WTC11 (cell line): ENCODE measurements at regions of chr12 and their contacts with region 1.

Region 1: DNA sequence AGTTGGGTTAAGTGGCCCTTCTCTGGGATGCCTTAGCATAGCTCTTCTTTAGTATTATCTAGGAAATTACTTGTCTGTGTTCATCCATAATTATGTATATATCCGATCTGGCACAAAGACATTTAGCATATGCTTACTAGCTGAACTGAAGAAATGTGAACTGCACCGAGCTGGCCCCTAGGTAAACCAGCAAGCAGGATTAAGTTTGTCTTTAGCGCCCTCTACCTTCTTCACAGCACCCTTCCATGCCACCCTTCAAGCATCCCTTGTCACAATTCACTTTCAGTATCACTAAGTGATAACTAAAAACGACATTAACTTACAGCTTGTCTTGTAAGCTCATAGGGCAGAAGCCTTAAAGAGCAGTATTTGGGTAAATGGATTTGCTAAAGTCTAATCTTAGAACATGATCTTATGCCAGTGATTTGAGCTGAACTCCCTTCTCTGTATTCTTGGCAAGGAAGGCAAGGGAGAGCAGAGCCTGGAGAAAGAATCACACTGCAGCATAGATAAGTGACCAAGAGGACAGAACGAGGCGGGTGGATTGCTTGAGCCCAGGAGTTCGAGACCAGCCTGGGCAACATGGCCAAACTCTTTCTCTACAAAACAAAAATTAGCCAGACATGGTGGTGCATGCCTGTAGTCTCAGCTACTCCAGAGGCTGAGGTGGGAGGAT is 2.6 kb upstream of the HAL start:
- DNase-seq: peak; percentile 32
- ATAC-seq: peak; percentile 97
- H3K4me3 Mint-ChIP-seq: no peak overlapping the region
- H3K27ac Mint-ChIP-seq: peak overlapping the region; percentile 25; the same call in 1 of the 2 replicates
- H3K4me1 Mint-ChIP-seq: peaks cover 6% of the 10 kb centered on the region
- H3K27me3 Mint-ChIP-seq: no peaks in the 10 kb centered on the region
- CTCF ChIP-seq: peak; percentile 50; the same call in 1 of the 2 replicates

Region 2: GRCh38 chr12:95739561-95740313 is 259.0 kb before region 1 on chr12:
- CTCF ChIA-PET with region 1: no interaction called
- POLR2A ChIA-PET with region 1: no interaction called
- DNase-seq: no peak
- ATAC-seq: no peak
- H3K4me3 Mint-ChIP-seq: no peak overlapping the region
- H3K27ac Mint-ChIP-seq: no peak overlapping the region
- H3K4me1 Mint-ChIP-seq: no peaks in the 10 kb centered on the region
- H3K27me3 Mint-ChIP-seq: no peaks in the 10 kb centered on the region
- CTCF ChIP-seq: no peak

Region 3: DNA sequence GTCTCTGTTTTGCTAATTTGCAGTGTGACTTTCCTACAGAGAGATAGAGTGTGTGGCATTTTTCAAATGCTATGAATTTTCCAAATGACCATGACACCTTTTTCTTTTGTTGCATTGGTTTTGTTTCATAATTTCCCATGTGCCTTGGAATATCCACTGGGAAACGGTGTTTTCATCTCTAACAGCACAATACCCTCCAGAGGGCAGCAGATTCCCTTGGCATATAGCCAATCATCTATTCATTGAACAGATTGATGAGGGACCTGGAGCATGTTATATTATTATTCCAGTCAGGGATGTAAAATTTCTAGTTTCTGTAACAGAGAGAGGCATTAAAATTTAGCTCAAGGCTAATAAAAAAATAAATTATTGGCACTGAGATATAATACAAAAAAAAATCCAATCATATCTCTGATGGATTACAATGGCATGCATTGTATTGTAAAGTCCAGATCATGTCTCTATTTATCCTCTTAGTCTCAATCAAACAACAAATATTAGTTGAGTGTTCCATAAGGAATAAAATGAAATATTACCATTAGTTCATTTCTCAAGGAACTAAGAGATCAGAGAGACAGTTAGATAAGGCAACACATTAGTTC is 178.5 kb before region 1 on chr12:
- CTCF ChIA-PET with region 1: no interaction called
- POLR2A ChIA-PET with region 1: no interaction called
- DNase-seq: no peak
- ATAC-seq: no peak
- H3K4me3 Mint-ChIP-seq: no peak overlapping the region
- H3K27ac Mint-ChIP-seq: no peak overlapping the region
- H3K4me1 Mint-ChIP-seq: peaks cover 3% of the 10 kb centered on the region; the same call in 1 of the 2 replicates
- H3K27me3 Mint-ChIP-seq: no peaks in the 10 kb centered on the region
- CTCF ChIP-seq: no peak; the same call in 1 of the 2 replicates

Region 4: GRCh38 chr12:95874452-95874851 is 124.3 kb before region 1 on chr12:
- CTCF ChIA-PET with region 1: interaction called, 13 read pairs
- POLR2A ChIA-PET with region 1: no interaction called
- DNase-seq: peak; percentile 20
- ATAC-seq: peak; percentile 94
- H3K4me3 Mint-ChIP-seq: no peak overlapping the region
- H3K27ac Mint-ChIP-seq: no peak overlapping the region
- H3K4me1 Mint-ChIP-seq: peaks cover 22% of the 10 kb centered on the region
- H3K27me3 Mint-ChIP-seq: no peaks in the 10 kb centered on the region
- CTCF ChIP-seq: no peak

Region 5: DNA sequence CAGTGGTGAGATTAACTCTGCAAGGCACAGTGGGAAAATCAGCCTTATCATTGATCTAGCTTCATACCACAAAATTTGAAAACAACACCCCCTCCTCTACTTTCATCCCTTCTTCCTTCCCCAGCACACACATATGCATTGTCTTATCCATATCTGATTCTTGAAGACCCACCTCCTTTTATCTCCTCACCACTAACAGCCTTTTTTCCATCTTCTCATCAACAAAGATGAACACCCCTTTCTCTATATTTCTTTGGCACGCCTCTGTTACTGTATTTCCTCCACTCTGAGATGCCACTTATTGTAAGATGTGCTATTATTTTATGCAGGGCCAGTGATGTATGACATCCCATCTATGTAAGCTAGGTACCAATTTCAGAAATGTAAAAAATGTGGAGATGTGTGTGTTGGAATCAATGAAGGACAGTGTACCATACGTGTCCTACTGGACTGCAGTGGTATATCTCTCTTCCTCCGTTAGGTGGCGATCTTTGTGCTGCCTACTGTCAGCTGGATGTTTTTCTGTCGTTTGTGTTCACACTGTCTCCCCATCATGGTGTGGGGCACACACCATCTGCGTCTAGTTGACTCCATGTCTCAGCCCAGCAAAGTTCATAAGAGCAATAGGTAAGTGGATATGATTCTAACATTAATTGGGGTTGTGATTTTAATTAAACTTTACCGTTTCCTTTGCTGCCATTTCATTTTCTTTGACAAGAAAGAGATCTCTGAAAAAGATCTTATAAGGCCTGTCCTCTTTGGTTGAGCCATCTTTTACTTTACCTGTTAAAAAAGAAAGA is 80.4 kb before region 1 on chr12:
- CTCF ChIA-PET with region 1: interaction called, 66 read pairs
- POLR2A ChIA-PET with region 1: no interaction called
- DNase-seq: peak; percentile 47
- ATAC-seq: peak; percentile 99
- H3K4me3 Mint-ChIP-seq: no peak overlapping the region
- H3K27ac Mint-ChIP-seq: no peak overlapping the region
- H3K4me1 Mint-ChIP-seq: no peaks in the 10 kb centered on the region
- H3K27me3 Mint-ChIP-seq: no peaks in the 10 kb centered on the region
- CTCF ChIP-seq: peak; percentile 73

Region 6: GRCh38 chr12:95942524-95943329 is 56.0 kb before region 1 on chr12 and contains the start of gene CCDC38:
- CTCF ChIA-PET with region 1: interaction called, 46 read pairs
- POLR2A ChIA-PET with region 1: no interaction called
- DNase-seq: peak; percentile 70
- ATAC-seq: peak; percentile 87
- H3K4me3 Mint-ChIP-seq: peak within 1 kb of the TSS; percentile 94
- H3K27ac Mint-ChIP-seq: peak within 1 kb of the TSS; percentile 58; the same call in 1 of the 2 replicates
- H3K4me1 Mint-ChIP-seq: peaks cover 23% of the 10 kb centered on the region
- H3K27me3 Mint-ChIP-seq: peaks cover 23% of the 10 kb centered on the region
- CTCF ChIP-seq: no peak
- total RNA-seq, gene CCDC38: 0.07 TPM in 1 of 3 replicates, not detected in the others

Region 7: DNA sequence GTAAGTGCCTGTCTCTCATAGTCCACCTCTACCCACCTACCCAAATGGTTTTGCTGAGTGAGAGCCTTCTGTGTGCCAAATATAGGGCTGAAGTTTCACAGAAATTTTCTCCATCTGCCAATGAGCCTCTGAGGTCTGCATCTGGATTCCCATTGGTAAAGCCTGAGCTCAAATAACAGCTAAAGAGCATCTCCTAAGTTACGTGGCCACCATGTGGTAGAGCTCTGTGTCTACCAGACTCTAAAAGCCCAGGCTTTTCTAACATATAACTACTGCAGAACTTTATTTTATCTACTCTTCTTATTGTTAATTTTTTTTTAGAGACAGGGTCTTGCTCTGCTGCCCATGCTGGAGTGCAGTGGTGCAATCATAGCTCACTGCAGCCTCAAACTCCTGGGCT is 39.6 kb before region 1 on chr12:
- CTCF ChIA-PET with region 1: interaction called, 14 read pairs
- POLR2A ChIA-PET with region 1: no interaction called
- DNase-seq: no peak
- ATAC-seq: peak; percentile 67
- H3K4me3 Mint-ChIP-seq: no peak overlapping the region
- H3K27ac Mint-ChIP-seq: no peak overlapping the region
- H3K4me1 Mint-ChIP-seq: peaks cover 19% of the 10 kb centered on the region
- H3K27me3 Mint-ChIP-seq: no peaks in the 10 kb centered on the region
- CTCF ChIP-seq: no peak

Region 8: GRCh38 chr12:95970905-95971304 is 27.8 kb before region 1 on chr12:
- CTCF ChIA-PET with region 1: interaction called, 14 read pairs
- POLR2A ChIA-PET with region 1: interaction called, 5 read pairs
- DNase-seq: peak; percentile 63
- ATAC-seq: peak; percentile 99
- H3K4me3 Mint-ChIP-seq: no peak overlapping the region
- H3K27ac Mint-ChIP-seq: peak overlapping the region; percentile 87
- H3K4me1 Mint-ChIP-seq: peaks cover 21% of the 10 kb centered on the region
- H3K27me3 Mint-ChIP-seq: peaks cover 4% of the 10 kb centered on the region; the same call in 1 of the 2 replicates
- CTCF ChIP-seq: no peak

Region 9: DNA sequence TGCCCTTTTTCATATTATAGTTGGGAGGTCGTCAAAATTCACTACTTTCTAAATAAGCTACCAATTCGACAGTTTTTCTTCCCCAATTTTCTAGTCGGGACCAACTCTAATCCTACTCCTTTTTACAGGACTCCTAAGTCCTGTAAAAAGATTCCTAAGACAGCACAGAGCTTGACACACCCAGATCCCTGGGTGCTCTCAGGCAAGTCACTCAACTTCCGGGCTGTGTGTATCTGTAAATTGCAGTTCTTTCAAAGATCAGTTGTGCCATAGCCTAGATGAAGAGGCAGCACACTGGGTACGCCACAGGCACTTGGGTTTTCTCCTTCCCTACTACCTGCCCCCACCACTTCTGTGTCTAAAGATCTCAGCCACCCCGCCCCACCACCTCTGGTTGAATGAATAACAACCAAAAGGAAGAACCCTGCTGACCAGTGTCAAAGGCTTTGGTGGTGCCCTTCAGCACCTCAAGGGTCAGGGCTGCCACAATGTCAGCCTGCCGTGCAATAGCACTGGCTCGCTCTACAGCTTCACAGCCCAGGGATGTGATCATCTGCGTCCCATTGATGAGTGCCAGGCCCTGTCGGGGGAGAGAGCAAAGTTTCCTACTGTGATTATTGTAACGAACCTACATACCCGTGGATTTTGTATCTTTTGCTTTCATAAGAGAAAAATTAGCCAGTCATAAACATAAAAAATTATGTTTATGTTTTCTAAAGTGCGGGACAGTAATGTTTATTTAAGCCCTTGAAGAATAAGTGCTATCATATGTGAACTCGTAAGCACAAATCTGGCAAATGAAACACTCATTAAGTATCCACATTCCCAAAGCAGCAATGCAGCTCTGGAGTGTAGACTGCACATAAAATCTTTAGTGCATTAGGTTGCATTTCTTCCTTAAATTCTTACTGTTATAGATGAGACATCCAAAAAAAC is 11.8 kb before region 1 on chr12:
- CTCF ChIA-PET with region 1: interaction called, 32 read pairs
- POLR2A ChIA-PET with region 1: no interaction called
- DNase-seq: peak; percentile 26
- ATAC-seq: peak; percentile 87
- H3K4me3 Mint-ChIP-seq: peak overlapping the region; percentile 12; the same call in 1 of the 2 replicates
- H3K27ac Mint-ChIP-seq: 0 out of 2 replicates have a peak overlapping the region, but pooled peaks have one; percentile 71
- H3K4me1 Mint-ChIP-seq: peaks cover 38% of the 10 kb centered on the region
- H3K27me3 Mint-ChIP-seq: no peaks in the 10 kb centered on the region
- CTCF ChIP-seq: no peak